PC-9 (cell line): ENCODE measurements at regions of chr10 and their contacts with region 1.

Region 1: GRCh38 chr10:103153302-103154197 is 39.5 kb downstream of the NT5C2 start:
- DNase-seq: peak in 1 of 2 experiments; percentile 66
- H3K4me3 ChIP-seq: peak overlapping the region; percentile 24; the same call in 1 of the 2 replicates
- H3K27ac ChIP-seq: peak overlapping the region; percentile 78
- H3K4me1 ChIP-seq: peaks cover 47% of the 10 kb centered on the region
- H3K27me3 ChIP-seq: no peaks in the 10 kb centered on the region
- CTCF ChIP-seq: no peak

Region 2: GRCh38 chr10:103231047-103231551 is 77.5 kb after region 1 on chr10:
- CTCF ChIA-PET with region 1: no interaction called
- POLR2A ChIA-PET with region 1: interaction called, 15 read pairs
- intact Hi-C with region 1: no loop called
- DNase-seq: peak; percentile 68 to 94
- H3K4me3 ChIP-seq: peak overlapping the region; percentile 4; the same call in 1 of the 2 replicates
- H3K27ac ChIP-seq: peak overlapping the region; percentile 100
- H3K4me1 ChIP-seq: peaks cover 70% of the 10 kb centered on the region
- H3K27me3 ChIP-seq: no peaks in the 10 kb centered on the region
- CTCF ChIP-seq: no peak